ENCODE measurements at regions of chr3 and their contacts with region 1.

Region 1: GRCh38 chr3:113136071-113136470 is 75.3 kb upstream of the BOC start:
- DNase-seq: no peak
- H3K4me3 ChIP-seq: no peak overlapping the region
- H3K27ac ChIP-seq: no peak overlapping the region
- H3K4me1 ChIP-seq: no peaks in the 10 kb centered on the region
- H3K27me3 ChIP-seq: no peaks in the 10 kb centered on the region
- CTCF ChIP-seq: peak; percentile 39 to 65 (median 50)

Region 2: GRCh38 chr3:113157408-113158030 is 21.4 kb after region 1 on chr3:
- intact Hi-C with region 1: no loop called
- DNase-seq: no peak
- H3K4me3 ChIP-seq: no peak overlapping the region
- H3K27ac ChIP-seq: no peak overlapping the region
- H3K4me1 ChIP-seq: no peaks in the 10 kb centered on the region
- H3K27me3 ChIP-seq: no peaks in the 10 kb centered on the region
- CTCF ChIP-seq: no peak

Region 3: GRCh38 chr3:113255100-113255853 is 119.2 kb after region 1 on chr3:
- intact Hi-C with region 1: no loop called
- DNase-seq: no peak
- H3K4me3 ChIP-seq: no peak overlapping the region
- H3K27ac ChIP-seq: peak overlapping the region; percentile 77 to 79
- H3K4me1 ChIP-seq: peaks cover 6 to 17% of the 10 kb centered on the region in 2 donors
- H3K27me3 ChIP-seq: no peaks in the 10 kb centered on the region
- CTCF ChIP-seq: no peak

Region 4: GRCh38 chr3:113287803-113288648 is 152.0 kb after region 1 on chr3:
- intact Hi-C with region 1: loop called (anchors 1 kb)
- DNase-seq: peak in 1 of 2 donors; percentile 81
- H3K4me3 ChIP-seq: no peak overlapping the region
- H3K27ac ChIP-seq: peak overlapping the region in 1 of 2 donors; percentile 3
- H3K4me1 ChIP-seq: no peaks in the 10 kb centered on the region
- H3K27me3 ChIP-seq: no peaks in the 10 kb centered on the region
- CTCF ChIP-seq: peak; percentile 96 to 99 (median 98)

Region 5: DNA sequence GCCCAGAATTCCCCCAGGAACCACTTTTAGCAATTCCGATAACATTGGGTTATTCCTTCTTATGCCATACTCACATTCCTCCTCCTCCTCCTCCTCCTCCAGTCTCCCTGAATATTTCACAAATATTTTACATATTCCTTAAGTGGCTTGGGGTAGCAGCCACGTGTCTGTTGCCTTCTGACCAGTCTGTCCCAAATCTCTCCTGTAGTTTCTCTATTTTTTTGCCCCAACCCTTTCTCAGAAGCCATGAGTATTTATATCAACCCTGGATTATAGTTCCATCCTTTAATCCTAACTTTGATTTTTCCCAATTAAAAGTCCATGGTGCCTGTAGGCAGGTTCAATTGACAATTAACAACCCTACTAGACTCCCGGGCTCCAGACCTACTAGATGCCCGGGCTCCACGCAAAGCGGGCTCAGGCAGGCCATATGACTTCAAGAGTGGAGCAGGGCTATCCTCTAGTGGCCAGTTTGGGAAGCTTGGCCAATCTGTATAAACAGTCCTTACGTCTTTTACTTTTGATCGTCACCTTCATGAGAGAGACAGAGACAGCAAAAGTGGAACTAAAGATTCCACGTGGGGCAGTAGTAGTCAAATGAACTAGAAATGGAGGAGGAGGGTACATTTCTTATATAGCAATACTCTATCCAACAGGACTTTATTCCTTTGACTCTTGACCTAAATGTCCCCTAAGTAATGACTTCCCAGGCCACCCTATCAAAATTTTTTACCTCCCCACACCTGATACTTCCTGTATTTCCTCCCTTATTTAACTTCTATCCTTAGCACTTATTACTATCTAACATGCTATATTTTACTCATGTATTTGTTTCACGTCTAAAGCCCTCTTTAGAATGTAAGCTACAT is 490.7 kb after region 1 on chr3:
- intact Hi-C with region 1: loop called (anchors 10 kb)
- DNase-seq: peak in 1 of 2 donors; percentile 81
- H3K4me3 ChIP-seq: peak overlapping the region in 1 of 2 donors; percentile 13
- H3K27ac ChIP-seq: no peak overlapping the region
- H3K4me1 ChIP-seq: no peaks in the 10 kb centered on the region
- H3K27me3 ChIP-seq: no peaks in the 10 kb centered on the region
- CTCF ChIP-seq: peak; percentile 63 to 76 (median 73)

Measured in ascending aorta (tissue), 2 donors.